ENCODE measurements at regions of chr21 and their contacts with region 1.

Region 1: GRCh38 chr21:43810505-43811261 is 21.3 kb downstream of the RRP1 start:
- DNase-seq: peak; percentile 93
- ATAC-seq: peak; percentile 90
- H3K4me3 Mint-ChIP-seq: no peak overlapping the region
- H3K27ac Mint-ChIP-seq: peak overlapping the region; percentile 52
- H3K4me1 Mint-ChIP-seq: peaks cover 16% of the 10 kb centered on the region
- H3K27me3 Mint-ChIP-seq: no peaks in the 10 kb centered on the region

Region 2: DNA sequence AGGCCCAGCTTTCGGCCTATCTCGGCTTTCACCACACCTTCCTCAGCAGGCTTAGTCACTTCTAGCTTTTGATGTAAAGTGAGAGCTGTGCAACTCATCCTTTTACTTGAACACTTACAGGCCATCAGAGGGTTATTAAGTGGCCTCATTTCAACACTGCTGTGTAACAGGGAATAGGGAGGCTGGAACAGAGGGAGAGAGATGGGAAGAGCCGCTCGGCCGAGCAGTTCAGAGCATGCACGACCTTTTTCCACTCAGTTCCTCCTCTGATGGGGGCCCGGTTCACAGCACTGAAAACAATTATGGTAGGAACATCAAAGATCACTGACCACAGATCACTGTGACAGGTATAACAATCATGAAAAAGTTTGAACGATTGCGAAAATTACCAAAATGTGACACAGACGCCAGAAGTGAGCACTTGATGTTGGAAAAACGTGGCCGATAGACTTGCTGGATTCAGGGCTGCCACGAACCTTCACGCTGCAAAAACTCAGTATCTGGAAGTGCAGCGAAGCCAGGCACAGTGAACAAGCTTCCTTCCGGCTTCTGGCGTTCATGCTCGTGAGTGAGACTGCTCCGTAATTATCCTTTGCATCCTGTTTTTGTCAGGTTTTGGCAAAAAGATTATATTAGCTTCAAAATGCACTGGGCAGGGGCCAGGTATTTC is 83.0 kb after region 1 on chr21:
- CTCF ChIA-PET with region 1: interaction called, 15 read pairs
- POLR2A ChIA-PET with region 1: no interaction called
- DNase-seq: peak; percentile 38
- ATAC-seq: peak; percentile 73
- H3K4me3 Mint-ChIP-seq: peak overlapping the region; percentile 61
- H3K27ac Mint-ChIP-seq: peak overlapping the region; percentile 64
- H3K4me1 Mint-ChIP-seq: peaks cover 41% of the 10 kb centered on the region
- H3K27me3 Mint-ChIP-seq: no peaks in the 10 kb centered on the region

Measured in activated CD8-positive, alpha-beta T cell treated with anti-CD3 and anti-CD28 coated beads, Interleukin-2, amount 10 ng/mL, durations not matched to agents 7 days and 5 days (primary cell).